CD4-positive, alpha-beta memory T cell (primary cell): ENCODE measurements at regions of chr17 and their contacts with region 1.

Region 1: GRCh38 chr17:30378824-30379302 is at the start of gene CPD:
- DNase-seq: peak; percentile 94 to 98 (median 95)
- H3K4me3 ChIP-seq: peak within 1 kb of the TSS; percentile 56 to 90
- H3K4me3 Mint-ChIP-seq: peak within 1 kb of the TSS; percentile 91 to 99 (median 96)
- H3K27ac ChIP-seq: peak within 1 kb of the TSS; percentile 85
- H3K27ac Mint-ChIP-seq: peak within 1 kb of the TSS; percentile 93 to 99 (median 97)
- H3K4me1 ChIP-seq: peaks cover 64% of the 10 kb centered on the region
- H3K4me1 Mint-ChIP-seq: peaks cover 43 to 65% (median 55%) of the 10 kb centered on the region in 4 donors
- H3K27me3 ChIP-seq: no peaks in the 10 kb centered on the region
- H3K27me3 Mint-ChIP-seq: peaks cover 0 to 2% of the 10 kb centered on the region in 2 donors
- total RNA-seq, gene CPD: 23.6 to 24.6 TPM

Region 2: DNA sequence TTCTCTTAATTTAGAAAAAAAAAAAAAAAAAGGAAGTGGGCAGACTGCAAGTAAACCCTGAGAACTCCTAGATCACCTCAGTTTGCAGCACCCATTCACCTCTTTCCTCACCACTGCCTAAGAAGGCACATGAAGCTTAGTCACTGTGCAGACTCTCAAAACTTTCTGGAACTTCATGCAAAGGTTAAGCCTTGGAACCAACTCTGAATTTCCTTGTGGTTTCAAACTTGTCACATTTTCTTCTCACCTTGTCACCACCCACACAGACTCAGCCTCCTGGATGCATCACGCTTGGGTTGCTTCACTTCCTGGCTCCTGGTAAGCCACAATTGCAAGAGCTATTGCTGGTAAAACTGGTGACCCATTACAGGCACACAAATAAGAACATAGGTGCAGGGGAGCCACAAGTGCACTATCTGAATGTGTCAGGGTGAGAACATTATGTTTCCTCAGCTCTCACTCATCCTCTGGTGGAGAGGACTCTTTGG is 15.1 kb before region 1 on chr17:
- CTCF ChIA-PET with region 1: interaction called, 11 read pairs
- POLR2A ChIA-PET with region 1: interaction called, 39 read pairs
- intact Hi-C with region 1: loop called (anchors 1 kb)
- DNase-seq: peak; percentile 80 to 94 (median 83)
- H3K4me3 ChIP-seq: peak overlapping the region in 1 of 2 donors; percentile 12
- H3K4me3 Mint-ChIP-seq: peak overlapping the region; percentile 50 to 83 (median 70)
- H3K27ac ChIP-seq: no peak overlapping the region
- H3K27ac Mint-ChIP-seq: peak overlapping the region; percentile 77 to 94 (median 89)
- H3K4me1 ChIP-seq: peaks cover 28% of the 10 kb centered on the region
- H3K4me1 Mint-ChIP-seq: peaks cover 19 to 37% (median 23%) of the 10 kb centered on the region in 4 donors
- H3K27me3 ChIP-seq: no peaks in the 10 kb centered on the region
- H3K27me3 Mint-ChIP-seq: no peaks in the 10 kb centered on the region